ENCODE measurements at regions of chr12 and their contacts with region 1.

Region 1: DNA sequence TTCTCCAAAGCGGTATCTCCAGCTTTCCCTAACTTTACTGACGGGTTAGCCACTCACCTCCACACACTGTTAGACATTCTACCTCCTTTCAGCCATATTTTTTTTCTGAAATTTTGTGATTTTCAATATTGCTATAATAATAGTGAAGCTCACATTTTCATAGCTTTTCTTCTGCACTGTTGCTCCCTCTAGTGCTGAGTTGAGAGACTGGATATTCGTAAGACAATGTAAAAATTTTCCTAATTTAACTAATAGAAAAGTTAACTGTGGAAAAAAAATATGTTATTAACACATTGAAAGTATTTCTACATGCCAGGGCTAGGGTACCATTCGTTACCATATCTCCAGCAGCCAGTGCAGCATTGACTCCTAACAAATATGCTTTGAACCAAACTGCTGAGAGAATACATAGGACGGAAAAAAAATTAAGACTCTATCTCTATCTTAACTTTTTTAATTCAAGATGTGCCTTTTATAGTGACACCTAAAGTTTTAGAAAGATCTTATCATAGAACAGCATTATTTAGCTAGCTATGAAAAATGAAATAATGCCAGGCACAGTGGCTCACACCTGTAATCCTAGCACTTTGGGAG is 48.7 kb upstream of the ABCC9 start:
- DNase-seq: peak; percentile 33
- H3K4me3 ChIP-seq: no peak overlapping the region; a peak in 1 of 4 replicates
- H3K27ac ChIP-seq: no peak overlapping the region
- H3K4me1 ChIP-seq: no peaks in the 10 kb centered on the region
- H3K27me3 ChIP-seq: peaks cover 8% of the 10 kb centered on the region; the same call in 1 of the 2 replicates
- CTCF ChIP-seq: peak; percentile 77
- EP300 ChIP-seq: no peak
- RAD21 ChIP-seq: peak; percentile 79

Region 2: DNA sequence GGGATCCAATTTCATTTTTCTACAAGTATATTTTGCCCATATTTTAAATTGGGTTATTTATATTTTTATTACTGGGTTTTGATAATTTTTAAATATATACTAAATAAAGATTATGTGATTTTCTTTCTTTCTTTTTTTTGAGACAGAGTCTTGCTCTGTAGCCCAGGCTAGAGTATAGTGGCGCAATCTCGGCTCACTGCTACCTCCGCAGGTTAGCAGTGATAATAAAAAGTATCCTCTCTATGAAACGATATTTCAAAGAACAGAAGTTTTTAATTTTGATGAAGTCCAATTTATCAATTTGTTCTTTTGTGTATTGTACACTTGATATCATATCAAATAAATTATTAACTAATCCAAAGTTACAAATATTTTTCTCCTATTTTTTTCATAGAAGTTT is 285.1 kb before region 1 on chr12:
- CTCF ChIA-PET with region 1: interaction called, 143 read pairs
- POLR2A ChIA-PET with region 1: no interaction called
- DNase-seq: no peak
- H3K4me3 ChIP-seq: no peak overlapping the region
- H3K27ac ChIP-seq: no peak overlapping the region
- H3K4me1 ChIP-seq: no peaks in the 10 kb centered on the region
- H3K27me3 ChIP-seq: peaks cover 8% of the 10 kb centered on the region; the same call in 1 of the 2 replicates
- CTCF ChIP-seq: no peak
- EP300 ChIP-seq: no peak
- RAD21 ChIP-seq: no peak

Region 3: GRCh38 chr12:21773263-21773741 is 216.6 kb before region 1 on chr12:
- CTCF ChIA-PET with region 1: interaction called, 18 read pairs
- POLR2A ChIA-PET with region 1: no interaction called
- DNase-seq: peak; percentile 43
- H3K4me3 ChIP-seq: peak overlapping the region in 1 of 2 experiments; percentile 50; a peak in 1 of 4 replicates
- H3K27ac ChIP-seq: peak overlapping the region in 1 of 2 experiments; percentile 86; a peak in 2 of 4 replicates
- H3K4me1 ChIP-seq: peaks cover 0 to 9% of the 10 kb centered on the region in 2 experiments; a peak in 3 of 4 replicates
- H3K27me3 ChIP-seq: peaks cover 10% of the 10 kb centered on the region
- CTCF ChIP-seq: peak; percentile 29
- EP300 ChIP-seq: no peak
- RAD21 ChIP-seq: peak; percentile 52

Region 4: GRCh38 chr12:22002430-22002829 is 12.5 kb after region 1 on chr12:
- CTCF ChIA-PET with region 1: interaction called, 13 read pairs
- POLR2A ChIA-PET with region 1: no interaction called
- DNase-seq: no peak
- H3K4me3 ChIP-seq: no peak overlapping the region
- H3K27ac ChIP-seq: no peak overlapping the region
- H3K4me1 ChIP-seq: no peaks in the 10 kb centered on the region
- H3K27me3 ChIP-seq: no peaks in the 10 kb centered on the region; the same call in 1 of the 2 replicates
- CTCF ChIP-seq: no peak
- EP300 ChIP-seq: no peak
- RAD21 ChIP-seq: no peak

Region 5: GRCh38 chr12:22018860-22019259 is 28.9 kb after region 1 on chr12:
- CTCF ChIA-PET with region 1: interaction called, 20 read pairs
- POLR2A ChIA-PET with region 1: no interaction called
- DNase-seq: no peak
- H3K4me3 ChIP-seq: no peak overlapping the region
- H3K27ac ChIP-seq: no peak overlapping the region
- H3K4me1 ChIP-seq: no peaks in the 10 kb centered on the region; a peak in 1 of 4 replicates
- H3K27me3 ChIP-seq: no peaks in the 10 kb centered on the region
- CTCF ChIP-seq: peak; percentile 59
- EP300 ChIP-seq: no peak
- RAD21 ChIP-seq: peak; percentile 47; the same call in 1 of the 2 replicates

Region 6: GRCh38 chr12:22083167-22083566 is 93.3 kb after region 1 on chr12:
- CTCF ChIA-PET with region 1: no interaction called
- POLR2A ChIA-PET with region 1: no interaction called
- DNase-seq: no peak
- H3K4me3 ChIP-seq: no peak overlapping the region
- H3K27ac ChIP-seq: no peak overlapping the region
- H3K4me1 ChIP-seq: no peaks in the 10 kb centered on the region
- H3K27me3 ChIP-seq: peaks cover 6% of the 10 kb centered on the region; the same call in 1 of the 2 replicates
- CTCF ChIP-seq: peak; percentile 59
- EP300 ChIP-seq: no peak
- RAD21 ChIP-seq: peak; percentile 68